ENCODE measurements at regions of chr13 and their contacts with region 1.

Region 1: DNA sequence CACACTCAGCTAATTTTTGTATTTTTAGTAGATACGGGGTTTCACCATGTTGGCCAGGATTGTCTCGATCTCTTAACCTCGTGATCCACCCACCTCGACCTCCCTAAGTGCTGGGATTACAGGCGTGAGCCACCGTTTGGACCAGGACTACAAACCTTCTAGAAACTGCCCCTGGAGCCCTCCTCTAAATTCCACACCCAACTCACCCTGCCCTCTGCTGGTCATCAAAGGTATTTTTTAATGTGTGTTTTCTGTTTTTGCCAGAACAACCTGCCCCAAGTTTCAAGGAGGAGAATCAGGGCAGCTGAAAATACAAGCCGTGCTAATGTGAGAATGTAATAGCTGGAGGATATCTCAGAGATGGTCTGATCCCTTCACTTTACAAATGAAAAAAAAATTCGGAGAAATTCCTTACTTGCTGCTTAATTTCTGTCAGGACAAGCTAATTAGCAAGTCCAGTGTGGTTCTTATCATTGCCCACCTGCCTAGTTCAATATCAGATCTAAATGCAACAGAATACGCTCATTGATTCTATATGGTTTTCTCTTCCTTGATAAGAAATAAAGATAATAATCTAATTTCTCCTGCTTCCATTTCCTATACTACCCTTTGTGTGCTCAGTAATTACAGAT is 4.1 kb downstream of the ATP8A2 start:
- DNase-seq: peak in 1 of 10 donors; percentile 37
- H3K4me3 ChIP-seq: no peak overlapping the region
- H3K27ac ChIP-seq: no peak overlapping the region
- H3K27me3 ChIP-seq: peaks cover 0 to 13% (median 0%) of the 10 kb centered on the region in 45 donors
- CTCF ChIP-seq: peak; percentile 48 to 77 (median 68)

Region 2: DNA sequence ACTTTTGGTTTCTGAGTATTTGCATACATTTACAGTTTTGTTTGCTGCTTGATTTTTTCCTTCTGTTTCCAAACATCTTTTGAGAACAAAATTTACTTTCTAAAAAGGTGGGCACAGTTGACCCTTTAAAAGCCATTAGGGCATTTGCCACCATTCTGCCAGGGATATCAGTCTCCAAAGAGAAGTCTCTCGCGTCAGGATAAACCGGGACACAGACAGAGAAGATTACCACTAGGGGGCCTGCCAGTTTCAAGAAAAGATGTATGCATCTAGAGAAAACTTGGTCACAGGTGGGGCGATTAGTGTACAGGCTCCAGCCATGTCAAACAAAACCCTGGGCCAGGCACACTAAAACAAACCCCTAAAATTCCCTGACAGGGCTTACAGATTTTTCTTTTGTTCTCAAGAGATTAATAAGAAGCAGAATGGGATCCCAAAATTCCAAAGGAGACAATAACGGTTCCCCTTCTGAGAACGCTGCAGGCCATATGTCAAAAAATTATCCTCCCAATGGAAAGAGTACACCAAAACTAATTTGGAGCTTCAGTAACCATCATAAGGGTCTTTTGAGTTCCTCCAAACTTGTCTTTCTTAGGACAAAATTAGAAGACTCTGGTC is 290.6 kb before region 1 on chr13:
- intact Hi-C with region 1: loop called (anchors 5 to 10 kb)
- DNase-seq: peak in 7 of 10 donors; percentile 41 to 82 (median 66)
- H3K4me3 ChIP-seq: peak overlapping the region in 21 of 59 donors; percentile 3 to 42 (median 18)
- H3K27ac ChIP-seq: peak overlapping the region in 56 of 59 donors; percentile 9 to 89 (median 71)
- H3K27me3 ChIP-seq: no peaks in the 10 kb centered on the region
- CTCF ChIP-seq: peak; percentile 59 to 89 (median 78)

Region 3: DNA sequence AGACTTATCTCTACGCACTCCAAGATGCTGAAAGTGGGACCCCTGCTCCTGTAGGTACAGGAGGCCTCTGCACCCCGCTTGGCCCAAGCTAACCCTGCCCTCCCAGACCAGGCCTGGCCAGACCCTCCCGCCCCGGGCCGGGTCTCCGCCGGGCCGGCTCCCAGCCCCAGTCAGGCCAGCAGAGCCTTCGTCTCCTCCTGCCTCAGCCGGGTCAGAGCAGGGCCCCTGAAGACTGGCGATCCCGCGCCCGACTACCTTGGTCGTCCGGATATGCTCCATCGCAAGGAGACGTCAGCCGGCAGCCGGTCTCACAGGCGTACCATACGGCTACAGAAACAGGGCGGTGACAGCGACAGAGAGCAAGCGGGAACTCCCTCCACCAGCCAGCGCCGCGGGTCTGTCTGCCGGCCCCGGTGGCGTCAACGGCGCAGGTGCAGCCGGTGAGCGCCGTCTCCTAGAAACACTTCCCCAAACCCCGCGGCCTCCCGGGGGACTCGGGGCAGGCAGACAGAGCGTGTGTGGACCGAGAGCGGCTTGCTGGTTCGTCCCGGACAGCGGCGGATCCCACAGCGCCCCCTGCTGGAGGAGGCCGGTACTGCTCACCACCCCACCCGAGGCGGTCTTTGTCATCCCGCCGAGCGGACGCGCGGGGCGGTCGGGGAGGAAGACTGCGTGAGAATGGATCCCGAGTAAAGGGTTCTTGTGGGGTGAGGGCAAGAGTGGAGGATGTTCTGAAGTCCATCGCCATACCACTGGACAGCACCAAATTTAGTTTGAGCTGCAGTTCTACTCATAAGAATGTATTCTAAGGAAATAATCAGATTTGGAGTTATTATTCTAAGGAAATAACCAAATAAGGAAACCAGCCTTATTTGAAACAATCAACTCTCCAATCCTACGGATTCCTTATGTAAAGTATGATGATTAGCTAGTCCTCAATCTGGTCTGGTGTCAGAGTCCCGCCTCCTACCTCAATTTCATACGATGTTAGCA is 88.6 kb before region 1 on chr13 and contains the start of gene MTMR6:
- intact Hi-C with region 1: loop called in 1 of 2 experiments (anchors 5 kb)
- DNase-seq: peak; percentile 86 to 96 (median 92)
- H3K4me3 ChIP-seq: peak within 1 kb of the TSS; percentile 58 to 100 (median 94)
- H3K27ac ChIP-seq: peak within 1 kb of the TSS in 58 of 59 donors; percentile 44 to 95 (median 87)
- H3K27me3 ChIP-seq: no peaks in the 10 kb centered on the region
- CTCF ChIP-seq: peak; percentile 96 to 100 (median 100)
- total RNA-seq, gene MTMR6: 12.7 to 34.5 (median 25.1) TPM

Region 4: GRCh38 chr13:25493931-25494640 is 118.2 kb after region 1 on chr13:
- intact Hi-C with region 1: loop called in 1 of 2 experiments (anchors 5 kb)
- DNase-seq: no peak
- H3K4me3 ChIP-seq: no peak overlapping the region
- H3K27ac ChIP-seq: peak overlapping the region in 15 of 59 donors; percentile 1 to 90 (median 28)
- H3K27me3 ChIP-seq: no peaks in the 10 kb centered on the region
- CTCF ChIP-seq: no peak

Measured in dorsolateral prefrontal cortex (tissue), 120 donors.